GM10248 (cell line): ENCODE measurements at regions of chr19 and their contacts with region 1.

Region 1: GRCh38 chr19:18281082-18282020 is at the start of gene JUND:
- DNase-seq: peak; percentile 98
- CTCF ChIP-seq: peak; percentile 3

Region 2: DNA sequence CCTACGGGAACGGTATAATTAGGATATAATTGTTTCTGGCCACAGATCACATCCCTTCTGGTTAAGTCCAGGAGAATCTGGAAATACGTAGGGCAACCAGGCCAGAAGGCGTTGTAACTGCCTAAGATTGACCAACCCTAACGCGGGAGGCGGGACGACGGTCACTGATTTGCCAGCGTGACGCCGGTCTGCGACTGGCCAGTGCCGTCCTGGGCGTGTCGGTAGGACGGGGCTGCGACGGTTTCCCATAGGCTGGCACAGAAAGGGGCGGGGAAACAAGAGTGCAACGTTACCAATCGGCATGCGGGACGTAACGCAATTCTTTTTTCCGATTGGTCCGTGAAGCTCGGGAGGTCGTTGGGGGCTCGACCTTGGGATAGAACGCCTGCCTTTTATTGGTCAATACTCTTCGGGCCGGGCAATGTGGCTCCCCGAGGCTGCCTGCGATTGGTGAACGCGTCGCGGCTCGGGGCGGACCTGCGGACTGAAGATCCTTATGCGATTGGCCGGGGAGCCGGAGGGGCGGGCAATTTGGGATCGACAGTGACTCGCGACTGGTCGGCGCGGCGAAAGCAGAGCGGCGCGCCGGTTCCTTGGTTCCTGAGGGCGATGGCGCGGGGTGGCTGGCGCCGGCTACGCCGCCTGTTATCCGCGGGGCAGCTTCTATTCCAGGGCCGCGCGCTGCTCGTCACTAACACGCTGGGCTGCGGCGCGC is 88.5 kb before region 1 on chr19 and contains the start of gene MPV17L2:
- CTCF ChIA-PET with region 1: interaction called, 4 read pairs
- POLR2A ChIA-PET with region 1: interaction called, 26 read pairs
- DNase-seq: peak; percentile 95
- CTCF ChIP-seq: no peak

Region 3: DNA sequence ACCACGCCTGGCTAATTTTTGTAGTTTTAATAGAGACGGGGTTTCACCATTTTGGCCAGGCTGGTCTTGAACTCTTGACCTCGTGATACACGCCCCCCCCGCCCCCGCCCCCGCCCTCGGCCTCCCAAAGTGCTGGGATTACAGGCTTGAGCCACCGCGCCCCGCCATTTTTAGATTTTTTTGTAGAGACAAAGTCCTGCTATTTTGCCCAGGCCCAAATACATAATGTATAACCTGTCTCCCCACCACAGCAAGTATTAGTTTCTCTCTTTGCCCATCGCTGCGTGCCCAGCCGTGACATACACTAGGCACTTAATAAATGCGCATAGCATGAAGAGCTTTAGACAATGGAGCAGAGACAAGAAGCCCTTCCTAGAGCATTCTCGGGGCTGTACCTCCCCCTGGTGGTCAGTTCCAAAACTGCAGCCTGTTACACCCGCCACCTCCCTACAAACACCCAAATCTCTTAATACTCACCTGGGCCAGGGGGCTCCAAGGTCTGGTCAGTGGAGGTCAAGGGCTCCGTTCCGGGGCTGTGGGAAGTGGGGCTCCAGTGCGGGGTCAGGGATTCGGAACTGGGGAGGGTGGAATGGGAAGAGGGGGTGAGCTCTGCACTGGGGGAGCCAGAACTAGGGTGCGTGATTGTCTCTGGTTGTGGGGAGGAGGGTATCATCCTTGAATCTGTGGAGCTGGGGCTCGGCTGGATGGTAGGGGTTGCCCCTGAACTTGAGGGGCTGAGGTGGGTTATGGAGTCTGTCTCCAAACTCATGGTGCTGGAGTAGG is 29.6 kb before region 1 on chr19:
- CTCF ChIA-PET with region 1: interaction called, 12 read pairs
- POLR2A ChIA-PET with region 1: interaction called, 6 read pairs
- DNase-seq: peak; percentile 89
- CTCF ChIP-seq: peak; percentile 92

Region 4: DNA sequence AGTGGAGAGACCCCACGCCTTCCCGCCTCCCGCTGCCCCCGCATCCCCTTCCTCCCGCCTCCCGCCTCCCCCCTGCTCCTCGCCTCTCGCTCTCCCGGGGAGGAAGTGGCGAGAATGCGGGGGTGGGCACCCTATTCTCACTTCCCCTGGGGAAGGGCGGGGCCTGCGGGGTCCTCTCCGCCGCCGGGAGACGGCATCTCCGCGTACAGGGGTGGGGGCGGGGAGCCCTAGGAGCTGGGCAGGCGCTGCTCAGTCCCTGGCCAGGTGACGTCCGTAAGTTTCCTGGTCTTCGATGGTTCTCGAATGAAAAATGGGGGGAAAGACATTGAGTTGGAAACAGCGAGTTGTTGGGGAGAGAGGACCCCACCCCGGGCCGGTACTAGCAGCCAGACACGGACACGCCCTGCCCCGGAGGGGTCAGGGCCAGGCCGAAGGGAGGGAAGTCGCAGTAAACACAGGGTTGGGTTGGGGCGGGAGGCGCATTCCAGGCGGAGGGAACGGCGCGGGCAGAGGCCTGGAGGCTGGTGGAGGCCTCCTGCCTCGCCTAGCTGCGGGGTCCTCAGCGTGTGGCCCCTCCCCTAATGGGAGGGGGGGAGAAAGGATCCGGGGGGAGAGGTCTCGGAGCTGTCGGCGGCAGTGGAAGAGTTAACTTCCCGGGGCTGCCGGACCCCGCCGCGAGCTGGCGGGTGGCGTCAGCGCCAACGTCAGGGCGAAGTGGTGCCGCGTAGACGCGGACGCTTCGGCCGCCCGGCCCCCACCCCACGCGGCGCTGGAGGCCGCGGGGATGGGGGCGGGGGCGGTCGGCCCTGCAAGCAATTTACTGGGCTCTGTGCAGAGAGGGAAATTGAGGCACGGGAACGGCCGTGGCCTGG is 10.5 kb after region 1 on chr19:
- CTCF ChIA-PET with region 1: interaction called, 43 read pairs
- POLR2A ChIA-PET with region 1: interaction called, 110 read pairs
- DNase-seq: peak; percentile 91
- CTCF ChIP-seq: no peak

Region 5: GRCh38 chr19:18322759-18323460 is 41.6 kb after region 1 on chr19 and contains the start of gene LSM4:
- CTCF ChIA-PET with region 1: interaction called, 171 read pairs
- POLR2A ChIA-PET with region 1: interaction called, 154 read pairs
- DNase-seq: peak; percentile 99
- CTCF ChIP-seq: peak; percentile 41

Region 6: GRCh38 chr19:18388100-18388959 is 107.0 kb after region 1 on chr19:
- CTCF ChIA-PET with region 1: interaction called, 30 read pairs
- POLR2A ChIA-PET with region 1: interaction called, 14 read pairs
- DNase-seq: peak; percentile 93
- CTCF ChIP-seq: peak; percentile 100